Natural killer cell (primary cell): ENCODE measurements at regions of chr16 and their contacts with region 1.

Region 1: GRCh38 chr16:23803591-23804123 is 32.1 kb upstream of the PRKCB start:
- DNase-seq: peak; percentile 57 to 84
- ATAC-seq: peak; percentile 90 to 94 (median 94)
- H3K4me3 ChIP-seq: no peak overlapping the region
- H3K4me3 Mint-ChIP-seq: no peak overlapping the region
- H3K27ac ChIP-seq: no peak overlapping the region
- H3K27ac Mint-ChIP-seq: no peak overlapping the region
- H3K4me1 ChIP-seq: no peaks in the 10 kb centered on the region
- H3K4me1 Mint-ChIP-seq: peaks cover 9 to 21% of the 10 kb centered on the region in 2 donors
- H3K27me3 ChIP-seq: no peaks in the 10 kb centered on the region
- H3K27me3 Mint-ChIP-seq: no peaks in the 10 kb centered on the region
- CTCF ChIP-seq: peak; percentile 77

Region 2: GRCh38 chr16:23835390-23836077 is 31.9 kb after region 1 on chr16 and contains the start of gene PRKCB:
- intact Hi-C with region 1: loop called (anchors 5 kb)
- DNase-seq: peak; percentile 95
- ATAC-seq: peak; percentile 95 to 97 (median 95)
- H3K4me3 ChIP-seq: peak within 1 kb of the TSS; percentile 77
- H3K4me3 Mint-ChIP-seq: peak within 1 kb of the TSS; percentile 99
- H3K27ac ChIP-seq: peak within 1 kb of the TSS; percentile 8
- H3K27ac Mint-ChIP-seq: peak within 1 kb of the TSS; percentile 83 to 91
- H3K4me1 ChIP-seq: peaks cover 34% of the 10 kb centered on the region
- H3K4me1 Mint-ChIP-seq: peaks cover 43 to 47% of the 10 kb centered on the region in 2 donors
- H3K27me3 ChIP-seq: no peaks in the 10 kb centered on the region
- H3K27me3 Mint-ChIP-seq: no peaks in the 10 kb centered on the region
- CTCF ChIP-seq: no peak
- total RNA-seq, gene PRKCB: 182 to 222 (median 183) TPM

Region 3: DNA sequence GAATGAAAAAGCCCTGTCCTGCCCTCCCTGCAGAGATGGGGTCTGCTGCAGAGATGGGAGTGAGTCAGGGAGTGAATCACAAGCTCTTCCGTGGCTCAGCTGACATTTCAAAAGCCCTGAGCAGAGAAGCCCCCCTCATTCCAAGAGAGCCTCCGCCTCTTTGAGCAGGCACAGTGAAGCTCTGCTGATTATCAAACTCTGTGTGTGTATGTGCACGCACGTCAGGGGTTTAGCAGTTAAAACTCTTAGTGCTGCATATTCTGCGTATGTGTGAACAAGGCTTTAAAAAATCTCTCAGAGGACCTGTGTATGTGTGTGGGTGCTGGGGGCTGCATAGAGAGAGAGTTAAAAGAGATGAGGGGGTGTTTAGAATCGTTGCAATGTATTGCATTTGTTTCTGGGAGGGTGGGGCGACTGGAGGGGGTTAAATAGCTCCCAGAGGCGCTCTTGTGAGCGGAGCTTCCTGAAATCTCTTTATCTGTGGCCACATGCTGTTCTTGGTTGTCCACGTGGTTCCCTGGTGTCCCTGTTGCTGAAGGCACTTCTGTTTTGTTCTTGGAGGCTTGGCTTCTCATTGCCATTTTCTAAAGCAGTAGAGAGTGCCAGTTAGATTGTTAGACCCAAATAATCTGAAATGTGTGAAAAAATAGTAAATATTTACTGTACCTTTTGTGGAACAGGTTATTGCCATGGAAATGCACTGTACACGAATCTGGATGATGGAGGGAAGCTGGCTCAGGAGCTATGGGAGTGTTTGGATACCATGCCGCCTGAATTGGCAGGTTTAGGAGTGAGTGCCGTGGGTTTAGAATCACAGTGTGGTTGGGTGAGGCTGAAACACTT is 148.7 kb after region 1 on chr16:
- intact Hi-C with region 1: loop called (anchors 5 kb)
- DNase-seq: peak in 1 of 2 donors; percentile 30
- ATAC-seq: peak in 2 of 3 donors; percentile 32 to 46
- H3K4me3 ChIP-seq: no peak overlapping the region
- H3K4me3 Mint-ChIP-seq: peak overlapping the region; percentile 29
- H3K27ac ChIP-seq: no peak overlapping the region
- H3K27ac Mint-ChIP-seq: peak overlapping the region; percentile 32 to 80
- H3K4me1 ChIP-seq: peaks cover 57% of the 10 kb centered on the region
- H3K4me1 Mint-ChIP-seq: peaks cover 69 to 84% of the 10 kb centered on the region in 2 donors
- H3K27me3 ChIP-seq: no peaks in the 10 kb centered on the region
- H3K27me3 Mint-ChIP-seq: no peaks in the 10 kb centered on the region
- CTCF ChIP-seq: no peak

Region 4: DNA sequence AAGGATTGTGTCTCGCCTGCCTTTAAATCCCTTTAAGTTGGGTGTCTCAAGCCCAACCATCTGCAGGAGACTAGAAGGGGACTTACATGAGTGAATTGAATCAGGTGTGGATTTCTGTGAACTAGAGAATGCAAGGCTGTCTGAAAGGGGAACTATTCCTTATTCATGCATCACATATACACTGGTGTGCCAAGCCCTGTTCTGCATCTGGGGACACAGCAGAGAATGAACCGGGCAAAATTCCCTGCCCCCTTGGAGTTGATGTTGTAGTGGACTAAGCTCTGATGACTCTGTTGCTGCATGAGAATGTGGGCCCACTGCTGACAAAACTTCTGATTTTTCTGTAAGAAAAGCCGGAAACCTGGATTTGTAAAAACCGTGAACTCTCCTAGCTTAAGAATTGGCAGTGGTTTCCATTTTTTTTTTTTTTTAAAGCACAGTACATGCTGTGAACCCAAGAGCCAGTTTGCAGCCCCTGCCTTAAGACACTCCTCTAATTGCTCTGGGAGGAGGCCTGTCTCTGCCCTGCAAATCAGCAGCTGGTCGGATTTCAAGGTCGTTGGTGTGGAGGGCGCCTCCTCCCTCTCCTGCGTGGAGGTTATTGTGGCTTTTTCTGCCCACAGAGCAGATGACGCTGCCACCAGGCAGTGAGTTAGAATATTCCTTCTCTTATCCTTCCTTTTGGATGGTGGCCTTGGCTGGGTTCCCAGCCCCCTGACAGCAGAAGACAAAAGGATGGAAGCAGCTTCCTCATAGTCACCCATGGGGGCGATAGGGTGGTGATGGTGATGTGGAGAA is 163.1 kb after region 1 on chr16:
- intact Hi-C with region 1: no loop called
- DNase-seq: peak in 1 of 2 donors; percentile 25
- ATAC-seq: peak in 2 of 3 donors; percentile 36 to 54
- H3K4me3 ChIP-seq: no peak overlapping the region
- H3K4me3 Mint-ChIP-seq: no peak overlapping the region
- H3K27ac ChIP-seq: no peak overlapping the region
- H3K27ac Mint-ChIP-seq: peak overlapping the region in 1 of 2 donors; percentile 62
- H3K4me1 ChIP-seq: peaks cover 20% of the 10 kb centered on the region
- H3K4me1 Mint-ChIP-seq: peaks cover 51 to 66% of the 10 kb centered on the region in 2 donors
- H3K27me3 ChIP-seq: no peaks in the 10 kb centered on the region
- H3K27me3 Mint-ChIP-seq: no peaks in the 10 kb centered on the region
- CTCF ChIP-seq: no peak

Region 5: DNA sequence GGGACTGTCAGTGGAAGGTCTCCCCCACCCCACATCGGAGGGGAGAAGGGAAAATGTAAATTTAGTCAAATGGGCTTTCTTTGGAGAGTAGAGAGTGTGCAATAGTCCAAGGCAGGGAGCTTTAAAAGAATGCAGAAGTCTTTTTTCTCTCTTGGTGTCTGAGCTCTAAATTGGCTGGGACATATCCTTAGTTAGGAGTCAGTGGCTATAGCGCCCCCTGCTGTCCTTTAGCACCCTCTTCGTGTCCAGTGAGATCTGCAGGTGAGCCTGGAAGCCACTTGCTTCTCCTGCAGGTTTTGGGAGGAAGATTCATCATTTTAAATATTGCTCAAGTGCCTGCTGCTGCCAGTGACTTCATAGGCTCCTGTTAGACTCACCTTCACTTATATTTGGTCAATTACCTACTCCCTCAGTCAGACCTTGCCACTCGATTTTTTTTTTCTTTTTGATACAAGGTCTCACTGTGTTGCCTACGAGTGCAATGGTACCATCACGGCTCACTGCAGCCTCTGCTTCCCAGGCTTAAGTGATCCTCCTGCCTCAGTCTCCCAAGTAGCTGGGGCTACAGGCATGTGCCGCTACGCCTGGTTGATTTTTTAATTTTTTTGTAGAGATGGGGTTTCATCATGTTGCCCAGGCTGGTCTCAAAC is 206.9 kb after region 1 on chr16:
- intact Hi-C with region 1: loop called (anchors 1 kb)
- DNase-seq: peak; percentile 68 to 93
- ATAC-seq: peak; percentile 54 to 67 (median 56)
- H3K4me3 ChIP-seq: no peak overlapping the region
- H3K4me3 Mint-ChIP-seq: no peak overlapping the region
- H3K27ac ChIP-seq: no peak overlapping the region
- H3K27ac Mint-ChIP-seq: no peak overlapping the region
- H3K4me1 ChIP-seq: peaks cover 50% of the 10 kb centered on the region
- H3K4me1 Mint-ChIP-seq: peaks cover 76 to 83% of the 10 kb centered on the region in 2 donors
- H3K27me3 ChIP-seq: no peaks in the 10 kb centered on the region
- H3K27me3 Mint-ChIP-seq: no peaks in the 10 kb centered on the region
- CTCF ChIP-seq: peak; percentile 84

Region 6: GRCh38 chr16:24036614-24037013 is 233.0 kb after region 1 on chr16:
- intact Hi-C with region 1: loop called (anchors 1 kb)
- DNase-seq: peak in 1 of 2 donors; percentile 76
- ATAC-seq: peak in 2 of 3 donors; percentile 57 to 63
- H3K4me3 ChIP-seq: no peak overlapping the region
- H3K4me3 Mint-ChIP-seq: peak overlapping the region; percentile 83
- H3K27ac ChIP-seq: no peak overlapping the region
- H3K27ac Mint-ChIP-seq: peak overlapping the region; percentile 62 to 75
- H3K4me1 ChIP-seq: peaks cover 52% of the 10 kb centered on the region
- H3K4me1 Mint-ChIP-seq: peaks cover 41 to 56% of the 10 kb centered on the region in 2 donors
- H3K27me3 ChIP-seq: no peaks in the 10 kb centered on the region
- H3K27me3 Mint-ChIP-seq: no peaks in the 10 kb centered on the region
- CTCF ChIP-seq: peak; percentile 70